Natural killer cell (primary cell): ENCODE measurements at regions of chr16 and their contacts with region 1.

Region 1: GRCh38 chr16:4425378-4426020 is at the start of gene DNAJA3:
- DNase-seq: peak; percentile 93 to 99
- ATAC-seq: peak; percentile 91 to 97 (median 91)
- H3K4me3 ChIP-seq: peak within 1 kb of the TSS; percentile 80
- H3K4me3 Mint-ChIP-seq: peak within 1 kb of the TSS; percentile 94
- H3K27ac ChIP-seq: peak within 1 kb of the TSS; percentile 96
- H3K27ac Mint-ChIP-seq: peak within 1 kb of the TSS; percentile 98 to 99
- H3K4me1 ChIP-seq: peaks cover 16% of the 10 kb centered on the region
- H3K4me1 Mint-ChIP-seq: peaks cover 21 to 32% of the 10 kb centered on the region in 2 donors
- H3K27me3 ChIP-seq: no peaks in the 10 kb centered on the region
- H3K27me3 Mint-ChIP-seq: no peaks in the 10 kb centered on the region
- CTCF ChIP-seq: no peak
- total RNA-seq, gene DNAJA3: 22.1 to 34.2 (median 27.2) TPM

Region 2: GRCh38 chr16:4307215-4308037 is 118.1 kb before region 1 on chr16:
- intact Hi-C with region 1: no loop called
- DNase-seq: peak; percentile 98
- ATAC-seq: peak; percentile 88 to 97 (median 89)
- H3K4me3 ChIP-seq: peak overlapping the region; percentile 67
- H3K4me3 Mint-ChIP-seq: peak overlapping the region; percentile 96
- H3K27ac ChIP-seq: peak overlapping the region; percentile 92
- H3K27ac Mint-ChIP-seq: peak overlapping the region; percentile 97 to 99
- H3K4me1 ChIP-seq: peaks cover 23% of the 10 kb centered on the region
- H3K4me1 Mint-ChIP-seq: peaks cover 12 to 19% of the 10 kb centered on the region in 2 donors
- H3K27me3 ChIP-seq: no peaks in the 10 kb centered on the region
- H3K27me3 Mint-ChIP-seq: no peaks in the 10 kb centered on the region
- CTCF ChIP-seq: no peak

Region 3: DNA sequence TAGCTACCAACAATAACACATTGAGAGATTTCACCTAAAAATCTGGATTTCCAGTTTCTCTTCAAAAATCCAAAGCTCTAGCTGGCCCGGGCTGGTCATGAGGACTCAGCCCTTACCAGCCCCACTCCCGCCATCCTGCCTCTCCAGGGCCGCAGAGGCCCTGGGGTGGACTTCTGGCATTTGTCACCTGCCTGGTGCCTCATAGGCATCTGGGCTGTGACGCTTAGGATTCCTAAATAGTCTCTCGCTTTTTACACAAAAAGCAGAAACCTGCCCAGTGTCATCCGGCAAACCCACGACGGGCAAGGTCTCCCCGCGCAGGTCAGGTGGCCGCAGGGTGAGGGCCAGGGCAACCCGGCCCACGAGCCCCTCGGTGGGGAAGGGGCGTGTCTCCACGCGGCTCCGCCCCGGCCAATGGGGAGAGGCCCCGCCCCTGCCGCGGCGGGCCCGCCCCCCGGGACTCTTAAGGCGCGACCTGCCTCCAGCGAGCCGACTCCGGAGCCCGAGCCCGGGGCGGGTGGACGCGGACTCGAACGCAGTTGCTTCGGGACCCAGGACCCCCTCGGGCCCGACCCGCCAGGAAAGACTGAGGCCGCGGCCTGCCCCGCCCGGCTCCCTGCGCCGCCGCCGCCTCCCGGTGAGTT is 54.0 kb before region 1 on chr16 and contains the start of gene VASN:
- intact Hi-C with region 1: no loop called
- DNase-seq: peak; percentile 79 to 85
- ATAC-seq: peak; percentile 84 to 90 (median 88)
- H3K4me3 ChIP-seq: peak within 1 kb of the TSS; percentile 16
- H3K4me3 Mint-ChIP-seq: peak within 1 kb of the TSS; percentile 75
- H3K27ac ChIP-seq: no peak within 1 kb of the TSS
- H3K27ac Mint-ChIP-seq: peak within 1 kb of the TSS in 1 of 2 donors; percentile 60
- H3K4me1 ChIP-seq: peaks cover 27% of the 10 kb centered on the region
- H3K4me1 Mint-ChIP-seq: peaks cover 0 to 20% of the 10 kb centered on the region in 2 donors
- H3K27me3 ChIP-seq: no peaks in the 10 kb centered on the region
- H3K27me3 Mint-ChIP-seq: no peaks in the 10 kb centered on the region
- CTCF ChIP-seq: no peak
- total RNA-seq, gene VASN: 0.35 to 0.93 (median 0.78) TPM

Region 4: GRCh38 chr16:4475880-4476788 is 50.6 kb after region 1 on chr16 and contains the start of gene HMOX2:
- intact Hi-C with region 1: loop called (anchors 5 kb)
- DNase-seq: peak; percentile 95 to 96
- ATAC-seq: peak; percentile 87 to 97 (median 91)
- H3K4me3 ChIP-seq: peak within 1 kb of the TSS; percentile 96
- H3K4me3 Mint-ChIP-seq: peak within 1 kb of the TSS; percentile 87
- H3K27ac ChIP-seq: peak within 1 kb of the TSS; percentile 71
- H3K27ac Mint-ChIP-seq: peak within 1 kb of the TSS; percentile 85
- H3K4me1 ChIP-seq: peaks cover 47% of the 10 kb centered on the region
- H3K4me1 Mint-ChIP-seq: peaks cover 23 to 46% of the 10 kb centered on the region in 2 donors
- H3K27me3 ChIP-seq: no peaks in the 10 kb centered on the region
- H3K27me3 Mint-ChIP-seq: no peaks in the 10 kb centered on the region
- CTCF ChIP-seq: peak; percentile 30
- total RNA-seq, gene HMOX2: 66.0 to 104 (median 77.3) TPM

Region 5: GRCh38 chr16:4538350-4539235 is 113.1 kb after region 1 on chr16 and contains the start of gene CDIP1:
- intact Hi-C with region 1: loop called (anchors 5 kb)
- DNase-seq: peak; percentile 92 to 97
- ATAC-seq: peak; percentile 87 to 93 (median 88)
- H3K4me3 ChIP-seq: peak within 1 kb of the TSS; percentile 60
- H3K4me3 Mint-ChIP-seq: peak within 1 kb of the TSS; percentile 84
- H3K27ac ChIP-seq: peak within 1 kb of the TSS; percentile 91
- H3K27ac Mint-ChIP-seq: peak within 1 kb of the TSS; percentile 85 to 88
- H3K4me1 ChIP-seq: peaks cover 43% of the 10 kb centered on the region
- H3K4me1 Mint-ChIP-seq: peaks cover 36 to 45% of the 10 kb centered on the region in 2 donors
- H3K27me3 ChIP-seq: no peaks in the 10 kb centered on the region
- H3K27me3 Mint-ChIP-seq: no peaks in the 10 kb centered on the region
- CTCF ChIP-seq: no peak
- total RNA-seq, gene CDIP1: 35.2 to 49.2 (median 37.9) TPM